ENCODE measurements at regions of chr6 and their contacts with region 1.

Region 1: DNA sequence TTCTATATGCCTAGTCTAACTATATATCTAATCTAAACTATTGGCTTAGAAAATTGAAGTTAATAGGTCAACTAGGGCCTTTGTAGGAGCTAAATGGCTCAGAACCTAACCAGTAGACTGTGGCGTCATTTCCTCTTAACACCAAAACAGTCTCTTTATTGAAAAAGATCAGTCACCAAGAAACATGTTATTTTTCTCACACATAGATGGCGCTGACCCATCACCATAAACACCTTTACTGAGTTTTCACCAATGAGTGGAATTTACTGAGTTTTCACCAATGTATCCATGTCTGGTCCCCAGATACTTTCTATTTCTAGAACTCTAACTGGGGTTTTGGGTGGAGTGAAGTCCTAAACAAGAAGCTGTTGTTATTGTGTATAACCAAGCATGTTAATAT is 636.0 kb downstream of the BCKDHB start:
- DNase-seq: no peak
- H3K4me3 ChIP-seq: no peak overlapping the region
- H3K27ac ChIP-seq: no peak overlapping the region
- H3K27me3 ChIP-seq: no peaks in the 10 kb centered on the region
- CTCF ChIP-seq: peak; percentile 48

Region 2: DNA sequence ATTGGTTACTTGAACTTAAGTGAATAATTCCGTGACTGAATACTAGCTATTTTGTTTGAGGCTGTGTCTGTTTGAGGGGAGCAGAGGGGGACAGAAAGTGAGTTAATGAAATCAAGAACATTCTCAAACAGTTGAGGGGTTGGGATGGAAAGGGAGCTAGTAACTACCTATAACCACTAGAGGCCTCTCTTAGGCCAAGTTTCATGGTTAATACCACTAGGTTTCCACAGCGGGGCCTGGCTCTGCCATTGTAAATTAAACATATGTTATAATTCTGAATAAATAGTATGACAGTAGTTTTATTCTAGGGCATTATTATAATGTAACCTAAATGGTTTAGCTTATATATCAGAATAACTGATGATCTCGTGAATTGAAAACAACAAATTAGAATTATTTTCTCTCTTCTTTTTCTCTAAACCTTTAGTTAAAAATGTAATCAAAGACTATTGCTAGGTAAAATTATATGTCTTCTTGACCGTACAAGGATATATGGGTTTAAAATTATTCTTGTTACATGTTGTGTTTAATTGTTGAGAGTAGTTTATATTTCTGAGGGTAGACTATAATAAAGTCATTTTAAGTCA is 528.0 kb before region 1 on chr6:
- CTCF ChIA-PET with region 1: interaction called, 12 read pairs
- POLR2A ChIA-PET with region 1: no interaction called
- DNase-seq: peak; percentile 13
- H3K4me3 ChIP-seq: no peak overlapping the region
- H3K27ac ChIP-seq: no peak overlapping the region
- H3K27me3 ChIP-seq: no peaks in the 10 kb centered on the region
- CTCF ChIP-seq: peak; percentile 91

Region 3: DNA sequence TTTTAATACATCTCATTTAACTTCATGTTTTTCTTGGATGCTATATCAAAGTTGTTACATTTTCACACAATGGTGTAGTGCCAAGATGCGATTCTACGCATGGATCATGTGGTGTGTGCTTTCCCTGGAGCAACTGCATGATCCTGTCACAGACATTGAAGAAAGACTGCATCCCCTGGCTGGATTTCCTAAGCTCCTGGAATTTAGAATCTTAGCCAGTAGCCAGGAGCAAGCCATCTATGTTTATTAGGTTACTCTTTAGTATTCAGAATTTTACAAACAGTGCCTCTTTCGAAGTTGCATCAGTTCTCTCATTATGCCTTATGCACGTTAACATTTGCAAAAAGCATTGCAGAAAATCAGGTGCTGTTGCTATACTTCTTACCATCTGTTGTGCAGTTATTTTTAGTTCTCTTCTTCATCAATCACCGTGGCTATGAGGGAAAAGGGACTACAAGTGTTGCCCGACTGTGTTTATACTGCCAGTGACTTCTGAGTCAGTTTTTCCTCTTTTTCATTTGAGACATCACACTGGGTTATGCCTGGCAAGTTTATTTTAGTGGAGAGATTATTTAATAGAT is 51.8 kb before region 1 on chr6:
- CTCF ChIA-PET with region 1: no interaction called
- POLR2A ChIA-PET with region 1: no interaction called
- DNase-seq: peak; percentile 48
- H3K4me3 ChIP-seq: no peak overlapping the region
- H3K27ac ChIP-seq: no peak overlapping the region
- H3K27me3 ChIP-seq: no peaks in the 10 kb centered on the region
- CTCF ChIP-seq: no peak

Region 4: DNA sequence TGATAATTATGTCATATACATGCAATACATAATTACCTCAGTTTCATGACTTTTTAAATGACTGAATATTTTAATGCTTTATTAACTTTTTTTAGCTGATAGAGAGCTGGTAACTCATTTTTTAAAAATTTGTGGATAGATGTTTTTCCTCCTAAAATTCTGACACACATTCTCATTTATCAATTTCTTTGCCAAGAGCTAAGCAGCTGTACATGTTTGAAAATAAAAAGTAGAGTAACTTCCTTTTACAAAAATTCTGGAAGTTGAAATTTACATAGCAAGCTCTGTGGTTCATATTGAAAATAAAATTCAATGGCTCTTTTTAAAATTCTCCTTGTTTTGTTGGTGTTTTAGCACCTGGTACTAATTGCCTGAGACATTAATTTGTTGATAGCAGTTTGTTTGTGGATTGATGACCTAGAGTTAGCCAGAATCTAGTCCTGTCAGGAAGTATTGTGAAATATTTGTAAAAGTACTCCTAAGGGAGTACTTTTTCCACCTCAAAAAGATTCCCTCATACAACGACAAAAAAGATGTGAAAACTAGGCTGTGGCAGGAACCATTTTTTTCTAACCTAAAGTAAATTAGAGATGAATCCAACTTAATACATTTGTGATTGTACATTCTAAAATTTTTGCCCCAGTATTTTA is 14.3 kb before region 1 on chr6:
- CTCF ChIA-PET with region 1: no interaction called
- POLR2A ChIA-PET with region 1: no interaction called
- DNase-seq: no peak
- H3K4me3 ChIP-seq: no peak overlapping the region
- H3K27ac ChIP-seq: no peak overlapping the region
- H3K27me3 ChIP-seq: no peaks in the 10 kb centered on the region
- CTCF ChIP-seq: no peak